ENCODE measurements at regions of chr15 and their contacts with region 1.

Region 1: DNA sequence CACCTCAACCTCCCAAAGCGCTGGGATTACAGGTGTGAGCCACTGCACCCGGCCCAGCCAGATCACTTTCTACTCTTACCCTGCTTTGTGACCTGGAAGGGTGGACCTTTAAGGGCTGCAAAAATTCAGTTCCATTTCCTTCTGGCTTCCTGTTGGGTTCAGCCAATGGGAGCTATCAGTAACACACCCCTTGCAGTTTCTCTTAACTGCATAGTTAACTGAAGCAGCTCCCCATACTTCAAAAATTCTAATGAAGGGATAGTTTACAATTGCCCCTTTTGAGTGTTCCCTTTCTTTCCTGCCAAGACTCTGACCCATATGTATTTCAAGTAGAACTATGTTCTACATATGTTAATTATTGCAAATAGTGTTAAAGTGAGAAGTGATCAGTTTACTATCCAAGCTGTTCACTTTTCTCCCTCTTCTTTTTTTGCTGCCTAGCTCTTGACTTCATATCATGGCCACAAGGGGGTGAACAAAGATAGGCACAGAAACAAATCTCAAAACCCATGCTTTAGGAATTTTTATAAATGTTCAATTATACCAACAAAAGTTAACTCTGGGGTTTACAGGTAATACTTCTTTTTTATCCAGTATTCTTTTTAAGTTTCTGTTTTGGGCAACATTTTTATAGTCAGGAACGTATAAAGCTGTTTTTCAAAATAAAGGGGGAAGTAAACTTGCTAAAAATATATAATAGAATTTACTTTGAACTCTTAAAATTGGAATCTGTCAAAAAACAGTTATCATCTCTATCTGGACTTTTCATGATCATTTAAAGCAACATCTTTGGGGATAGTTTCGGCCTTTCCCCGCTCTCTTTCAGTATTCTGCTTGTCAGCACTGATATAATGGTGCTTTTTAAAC is 8.1 kb downstream of the PGBD4 start:
- DNase-seq: no peak
- ATAC-seq: peak; percentile 58
- H3K4me3 Mint-ChIP-seq: no peak overlapping the region
- H3K27ac Mint-ChIP-seq: no peak overlapping the region
- H3K4me1 Mint-ChIP-seq: peaks cover 1% of the 10 kb centered on the region
- H3K27me3 Mint-ChIP-seq: peaks cover 3% of the 10 kb centered on the region

Region 2: DNA sequence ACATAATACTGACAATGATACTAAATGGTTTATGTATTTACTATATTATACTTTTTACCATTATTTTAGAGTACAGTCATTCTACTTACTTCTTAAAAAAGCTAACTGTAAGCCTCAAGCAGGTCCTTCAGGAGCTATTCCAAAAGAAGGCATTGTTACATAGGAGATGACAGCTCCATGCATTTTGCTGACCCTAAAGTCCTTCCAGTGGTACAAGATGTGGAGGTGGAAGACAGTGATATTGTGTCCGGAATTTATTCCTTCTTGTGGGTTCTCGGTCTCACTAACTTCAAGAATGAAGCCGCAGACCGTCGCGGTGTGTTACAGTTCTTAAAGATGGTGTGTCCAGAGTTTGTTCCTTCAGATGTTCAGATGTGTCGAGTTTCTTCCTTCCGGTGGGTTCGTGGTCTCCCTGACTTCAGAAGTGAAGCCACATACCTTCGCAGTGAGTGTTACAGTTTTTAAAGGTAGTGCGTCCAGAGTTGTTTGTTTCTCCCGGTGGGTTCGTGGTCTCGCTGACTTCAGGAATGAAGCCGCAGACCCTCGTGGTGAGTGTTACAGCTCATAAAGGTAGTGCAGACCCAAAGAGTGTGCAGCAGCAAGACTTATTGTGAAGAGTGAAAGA is 91.9 kb before region 1 on chr15:
- POLR2A ChIA-PET with region 1: interaction called, 11 read pairs
- DNase-seq: peak; percentile 70
- ATAC-seq: peak; percentile 75
- H3K4me3 Mint-ChIP-seq: peak overlapping the region; percentile 66
- H3K27ac Mint-ChIP-seq: peak overlapping the region; percentile 80
- H3K4me1 Mint-ChIP-seq: peaks cover 13% of the 10 kb centered on the region
- H3K27me3 Mint-ChIP-seq: peaks cover 14% of the 10 kb centered on the region

Measured in activated naive CD8-positive, alpha-beta T cell treated with anti-CD3 and anti-CD28 coated beads, Interleukin-2, amount 10 ng/mL, durations not matched to agents 7 days and 5 days (primary cell).